ENCODE measurements at regions of chr5 and their contacts with region 1.

Region 1: DNA sequence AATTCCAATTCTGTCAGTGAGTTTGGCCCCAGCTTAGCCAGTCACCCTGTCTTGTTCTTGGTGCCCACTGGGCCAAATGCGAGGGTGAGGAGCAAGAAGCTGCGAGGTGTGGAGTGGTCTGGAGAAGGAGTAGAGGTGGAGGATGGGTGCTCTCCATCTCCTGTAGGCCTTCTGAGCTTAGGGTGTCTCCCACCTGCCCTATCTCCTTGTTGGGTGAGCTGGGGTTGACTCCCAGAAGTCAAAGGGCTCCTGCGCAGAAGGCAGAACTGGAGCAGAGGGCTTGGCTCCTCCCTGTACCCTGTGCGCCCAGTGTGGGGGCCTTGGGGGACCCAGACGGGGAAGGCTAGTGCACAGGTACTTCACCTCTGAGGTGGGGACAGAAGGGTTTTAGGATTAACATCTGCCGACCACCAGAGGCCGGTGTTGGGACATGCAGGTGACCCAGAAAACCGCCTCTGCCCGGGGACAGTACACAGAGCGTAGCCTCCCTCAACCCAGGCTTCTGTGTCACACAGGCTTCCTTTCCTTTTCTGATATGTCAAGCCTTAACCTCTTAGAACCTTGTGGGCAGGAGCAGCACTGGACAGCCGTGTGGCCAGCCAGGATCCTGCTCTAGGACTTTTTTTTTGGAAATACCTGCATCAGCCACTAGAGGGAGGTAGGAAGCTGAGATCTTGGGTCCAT is 16.9 kb downstream of the IL5 start:
- DNase-seq: peak; percentile 43 to 63 (median 49)
- H3K4me3 ChIP-seq: no peak overlapping the region
- H3K4me3 Mint-ChIP-seq: peak overlapping the region in 2 of 8 donors; percentile 57 to 60
- H3K27ac ChIP-seq: no peak overlapping the region
- H3K27ac Mint-ChIP-seq: no peak overlapping the region
- H3K4me1 ChIP-seq: peaks cover 16% of the 10 kb centered on the region
- H3K4me1 Mint-ChIP-seq: peaks cover 8 to 15% (median 13%) of the 10 kb centered on the region in 4 donors
- H3K27me3 ChIP-seq: no peaks in the 10 kb centered on the region
- H3K27me3 Mint-ChIP-seq: peaks cover 0 to 1% of the 10 kb centered on the region in 2 donors

Region 2: DNA sequence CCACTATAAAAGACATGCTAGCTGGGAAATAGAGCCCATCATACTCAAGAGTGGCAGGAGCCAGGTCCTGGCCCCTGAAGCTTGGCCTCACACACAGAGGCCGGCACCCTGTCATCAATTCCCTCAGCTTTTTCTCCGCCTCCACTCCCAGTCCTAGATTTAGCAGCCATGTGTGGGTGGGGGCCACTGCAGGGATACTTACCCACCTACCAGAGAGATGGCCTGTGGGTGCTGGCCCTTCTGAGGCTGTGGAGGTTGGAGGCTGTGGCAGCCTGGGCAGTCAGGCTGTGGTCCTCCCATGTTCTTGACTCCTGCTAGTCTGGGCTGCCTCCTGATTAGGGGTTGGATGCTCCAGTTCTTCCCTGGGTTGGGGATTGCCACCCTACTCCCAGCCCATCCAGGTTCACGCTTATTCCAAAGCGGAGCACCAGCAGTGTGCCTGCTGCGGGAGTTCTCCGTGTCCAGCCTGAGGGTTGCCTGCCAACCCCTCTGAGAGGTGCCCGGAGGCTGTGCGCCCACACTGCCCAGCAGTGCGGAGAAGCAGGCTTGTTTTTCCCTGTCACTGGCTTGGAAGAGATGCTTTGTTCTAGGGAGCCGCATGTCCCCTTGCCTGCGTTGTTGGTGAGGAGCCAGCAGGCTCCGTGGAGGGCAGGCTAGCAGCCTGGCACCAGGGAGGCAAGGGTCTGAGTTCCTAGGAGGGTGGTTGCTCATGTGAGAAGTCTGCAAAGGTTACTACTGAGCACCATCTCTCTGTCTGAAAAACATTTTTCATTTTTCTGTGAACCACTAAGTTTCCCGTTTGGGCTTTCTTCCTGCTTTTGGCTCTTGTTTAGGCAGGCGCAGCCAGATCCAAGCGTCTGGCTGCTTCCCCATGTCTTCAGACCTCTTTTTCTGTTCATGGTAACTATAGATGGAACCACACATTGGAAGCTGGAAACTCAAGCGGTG is 149.5 kb before region 1 on chr5:
- CTCF ChIA-PET with region 1: no interaction called
- POLR2A ChIA-PET with region 1: no interaction called
- intact Hi-C with region 1: no loop called
- DNase-seq: no peak
- H3K4me3 ChIP-seq: no peak overlapping the region
- H3K4me3 Mint-ChIP-seq: no peak overlapping the region
- H3K27ac ChIP-seq: no peak overlapping the region
- H3K27ac Mint-ChIP-seq: no peak overlapping the region
- H3K4me1 ChIP-seq: peaks cover 8% of the 10 kb centered on the region
- H3K4me1 Mint-ChIP-seq: peaks cover 0 to 8% (median 5%) of the 10 kb centered on the region in 4 donors
- H3K27me3 ChIP-seq: no peaks in the 10 kb centered on the region
- H3K27me3 Mint-ChIP-seq: no peaks in the 10 kb centered on the region

Region 3: DNA sequence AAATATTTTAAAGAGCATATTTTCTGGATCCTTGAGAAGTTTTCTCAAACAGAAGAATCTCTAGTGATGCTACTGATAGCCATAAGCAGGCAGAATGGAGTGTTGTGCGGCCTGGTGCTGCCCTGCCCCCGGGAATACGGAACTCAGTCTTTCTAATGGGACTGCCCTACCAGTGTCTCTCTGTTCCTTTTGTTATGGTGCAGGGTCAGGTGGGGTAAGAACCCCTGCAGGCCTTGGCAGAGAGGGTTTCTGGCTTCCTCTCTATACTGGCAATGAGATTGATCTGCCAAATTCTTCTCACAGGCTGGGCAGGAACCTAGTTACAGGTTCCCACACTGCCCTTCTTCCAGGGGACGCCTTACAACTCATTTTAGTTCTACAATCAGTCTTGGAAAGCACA is 14.3 kb after region 1 on chr5:
- CTCF ChIA-PET with region 1: interaction called, 21 read pairs
- POLR2A ChIA-PET with region 1: no interaction called
- intact Hi-C with region 1: no loop called
- DNase-seq: no peak
- H3K4me3 ChIP-seq: no peak overlapping the region
- H3K4me3 Mint-ChIP-seq: no peak overlapping the region
- H3K27ac ChIP-seq: no peak overlapping the region
- H3K27ac Mint-ChIP-seq: no peak overlapping the region
- H3K4me1 ChIP-seq: no peaks in the 10 kb centered on the region
- H3K4me1 Mint-ChIP-seq: no peaks in the 10 kb centered on the region
- H3K27me3 ChIP-seq: no peaks in the 10 kb centered on the region
- H3K27me3 Mint-ChIP-seq: peaks cover 2 to 6% of the 10 kb centered on the region in 2 donors

Region 4: DNA sequence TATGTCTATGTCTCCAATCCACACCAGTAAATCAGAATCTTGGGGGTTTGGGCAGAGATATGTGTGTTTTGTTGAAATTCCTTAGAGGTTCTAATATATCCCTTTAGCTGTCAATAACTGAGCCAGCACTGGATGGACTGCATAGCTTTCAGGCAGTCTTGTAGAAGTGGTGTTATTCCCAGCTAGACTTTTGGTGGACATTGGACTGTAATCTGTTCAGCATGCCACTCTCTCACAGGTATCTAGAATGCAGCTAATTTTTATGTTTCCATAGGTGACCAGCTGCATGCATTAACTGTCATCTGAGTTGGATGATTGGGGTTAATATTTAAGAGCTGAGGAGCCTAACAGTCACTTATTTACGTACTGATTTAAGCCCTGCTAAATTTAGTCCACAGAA is 86.4 kb after region 1 on chr5:
- CTCF ChIA-PET with region 1: no interaction called
- POLR2A ChIA-PET with region 1: no interaction called
- intact Hi-C with region 1: loop called (anchors 10 kb)
- DNase-seq: no peak
- H3K4me3 ChIP-seq: no peak overlapping the region
- H3K4me3 Mint-ChIP-seq: no peak overlapping the region
- H3K27ac ChIP-seq: no peak overlapping the region
- H3K27ac Mint-ChIP-seq: peak overlapping the region in 1 of 7 donors; percentile 23
- H3K4me1 ChIP-seq: no peaks in the 10 kb centered on the region
- H3K4me1 Mint-ChIP-seq: no peaks in the 10 kb centered on the region
- H3K27me3 ChIP-seq: no peaks in the 10 kb centered on the region
- H3K27me3 Mint-ChIP-seq: no peaks in the 10 kb centered on the region

Region 5: DNA sequence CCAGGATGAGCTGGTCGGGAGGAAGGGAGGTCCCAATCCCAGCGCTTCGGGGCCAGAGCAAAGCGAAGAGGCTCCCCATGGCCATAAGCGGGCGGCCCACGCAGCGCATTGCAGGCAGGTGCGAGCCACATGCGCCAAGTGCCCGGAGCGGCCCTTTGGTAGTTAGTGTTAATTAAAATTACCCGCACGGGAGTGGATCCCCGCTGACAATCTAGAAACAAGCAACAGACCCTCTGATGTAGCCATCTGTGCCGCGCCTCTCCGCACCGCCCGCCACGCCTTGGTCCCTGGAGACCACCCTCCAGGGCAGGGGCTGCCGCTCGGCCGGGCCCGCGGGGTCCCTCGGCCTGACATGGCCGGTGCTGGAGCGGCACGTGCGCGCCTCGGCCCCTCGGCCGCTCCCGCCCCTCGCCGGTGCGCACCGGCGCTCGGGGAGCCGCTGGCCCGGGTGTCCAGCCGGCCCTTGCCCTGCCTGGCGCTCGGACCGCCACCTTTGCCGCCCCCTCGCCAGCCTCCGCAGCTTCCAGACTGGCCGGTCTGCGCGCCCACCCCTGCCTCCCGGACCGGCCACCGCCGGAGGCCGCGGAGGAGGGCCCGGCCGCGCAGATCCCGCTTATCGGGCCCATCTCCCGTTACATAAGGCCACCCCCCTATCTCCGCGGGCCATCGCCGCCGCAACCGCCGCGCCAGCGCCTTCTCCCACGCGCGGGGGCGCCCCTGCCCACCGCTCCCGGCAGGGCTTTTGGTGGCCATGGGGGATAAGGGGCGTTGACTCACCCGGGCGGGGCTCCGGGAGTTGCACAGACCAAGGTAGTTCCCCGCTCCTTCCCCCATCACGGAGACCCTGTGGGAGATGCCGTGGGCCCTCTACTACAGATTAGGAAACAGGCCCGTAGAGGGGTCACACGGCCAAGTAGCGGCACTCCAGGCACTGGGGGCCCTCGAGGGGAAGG is 129.7 kb after region 1 on chr5:
- CTCF ChIA-PET with region 1: no interaction called
- POLR2A ChIA-PET with region 1: no interaction called
- intact Hi-C with region 1: no loop called
- DNase-seq: peak in 2 of 5 donors; percentile 26 to 50
- H3K4me3 ChIP-seq: peak overlapping the region in 1 of 2 donors; percentile 19
- H3K4me3 Mint-ChIP-seq: peak overlapping the region in 7 of 8 donors; percentile 39 to 72 (median 57)
- H3K27ac ChIP-seq: no peak overlapping the region
- H3K27ac Mint-ChIP-seq: peak overlapping the region in 1 of 7 donors; percentile 60
- H3K4me1 ChIP-seq: peaks cover 10% of the 10 kb centered on the region
- H3K4me1 Mint-ChIP-seq: peaks cover 5 to 22% (median 6%) of the 10 kb centered on the region in 4 donors
- H3K27me3 ChIP-seq: peaks cover 7% of the 10 kb centered on the region
- H3K27me3 Mint-ChIP-seq: peaks cover 14 to 15% of the 10 kb centered on the region in 2 donors

Region 6: DNA sequence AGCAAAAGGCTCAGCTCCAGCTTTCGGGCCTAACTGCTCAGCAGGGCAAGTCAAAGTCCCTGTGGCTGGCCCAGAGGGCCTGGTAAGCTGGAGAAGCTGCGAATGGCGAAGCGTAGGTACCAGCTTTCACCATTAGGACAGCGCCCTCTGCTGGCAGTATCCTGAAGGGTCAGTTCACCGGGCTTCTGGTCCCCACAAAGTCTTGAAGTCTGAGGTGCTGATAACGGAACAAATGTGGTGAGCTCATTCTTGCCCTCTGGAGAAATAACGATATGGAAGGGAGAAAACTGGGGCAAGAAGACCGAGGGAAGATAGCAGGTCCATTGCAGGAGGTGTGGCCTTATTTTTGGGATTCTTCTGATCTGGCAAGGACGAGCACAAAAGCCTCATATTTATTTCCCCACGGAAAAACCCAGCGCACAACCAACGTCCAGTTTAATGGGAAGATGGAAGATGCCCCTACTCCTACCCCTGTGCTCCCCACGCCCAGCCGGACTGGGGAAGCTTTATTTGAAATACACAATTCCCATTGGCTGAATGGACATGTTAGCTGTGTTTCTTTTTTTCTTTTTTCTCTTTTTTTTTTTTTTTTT is 293.8 kb after region 1 on chr5:
- CTCF ChIA-PET with region 1: interaction called, 47 read pairs
- POLR2A ChIA-PET with region 1: no interaction called
- intact Hi-C with region 1: loop called (anchors 1 kb)
- DNase-seq: peak; percentile 78 to 84 (median 81)
- H3K4me3 ChIP-seq: no peak overlapping the region
- H3K4me3 Mint-ChIP-seq: peak overlapping the region in 5 of 8 donors; percentile 6 to 69 (median 49)
- H3K27ac ChIP-seq: no peak overlapping the region
- H3K27ac Mint-ChIP-seq: peak overlapping the region in 2 of 7 donors; percentile 3 to 51
- H3K4me1 ChIP-seq: peaks cover 11% of the 10 kb centered on the region
- H3K4me1 Mint-ChIP-seq: peaks cover 2 to 14% (median 7%) of the 10 kb centered on the region in 4 donors
- H3K27me3 ChIP-seq: peaks cover 15% of the 10 kb centered on the region
- H3K27me3 Mint-ChIP-seq: peaks cover 15 to 17% of the 10 kb centered on the region in 2 donors

Measured in CD4-positive, alpha-beta memory T cell (primary cell).